T-cell (primary cell): ENCODE measurements at regions of chr5 and their contacts with region 1.

Region 1: DNA sequence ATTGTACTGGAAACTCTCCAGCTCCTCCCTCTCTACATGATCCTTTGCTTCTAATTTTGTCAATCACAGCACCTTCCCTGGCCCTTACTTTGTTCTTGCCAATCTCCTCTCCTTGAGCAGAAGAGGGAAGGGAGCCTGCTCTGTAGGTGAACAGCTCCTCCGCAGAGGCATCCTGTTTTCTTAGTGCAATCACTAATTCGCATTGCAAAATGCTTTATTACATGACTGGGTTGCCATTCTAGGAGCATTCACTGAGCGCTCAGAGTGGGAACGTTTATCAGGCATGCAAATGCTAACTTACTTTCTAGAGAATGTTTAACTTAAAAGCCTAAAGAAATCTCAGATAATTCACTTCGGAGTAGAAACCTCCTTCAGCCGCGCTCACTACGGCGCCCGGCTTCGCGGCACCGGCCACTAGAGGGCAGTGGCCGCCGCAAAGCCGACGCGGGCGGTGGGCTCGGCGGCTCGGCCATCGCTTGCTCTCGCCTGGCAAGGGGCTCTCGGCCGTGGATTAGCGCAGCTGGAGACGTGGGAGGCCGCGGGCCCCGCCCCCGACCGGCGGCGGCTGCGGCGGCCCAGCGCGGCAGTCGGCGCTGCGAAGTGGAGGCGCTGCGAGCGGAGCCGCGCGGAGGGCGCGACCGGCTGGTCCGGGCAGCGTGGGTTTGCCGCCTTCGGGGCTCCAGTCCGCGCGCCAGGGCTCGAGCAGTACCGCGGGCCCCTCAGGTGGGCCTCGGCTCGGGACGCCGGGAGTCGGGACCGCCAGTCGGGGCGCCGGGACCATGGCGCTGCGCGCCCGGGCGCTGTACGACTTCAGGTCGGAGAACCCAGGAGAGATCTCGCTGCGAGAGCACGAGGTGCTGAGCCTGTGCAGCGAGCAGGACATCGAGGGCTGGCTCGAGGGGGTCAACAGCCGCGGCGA is at the start of gene SNX18:
- DNase-seq: peak; percentile 80 to 96 (median 91)
- ATAC-seq: peak; percentile 92 to 93 (median 92)
- H3K4me3 ChIP-seq: peak within 1 kb of the TSS; percentile 64 to 84
- H3K4me3 Mint-ChIP-seq: peak within 1 kb of the TSS; percentile 79 to 85 (median 81)
- H3K27ac ChIP-seq: no peak within 1 kb of the TSS
- H3K27ac Mint-ChIP-seq: peak within 1 kb of the TSS; percentile 21 to 22
- H3K4me1 ChIP-seq: peaks cover 29 to 31% of the 10 kb centered on the region in 2 experiments
- H3K4me1 Mint-ChIP-seq: peaks cover 30 to 49% (median 40%) of the 10 kb centered on the region in 3 donors
- H3K27me3 ChIP-seq: no peaks in the 10 kb centered on the region
- H3K27me3 Mint-ChIP-seq: no peaks in the 10 kb centered on the region
- total RNA-seq, gene SNX18: 13.7 to 35.7 (median 31.1) TPM

Region 2: DNA sequence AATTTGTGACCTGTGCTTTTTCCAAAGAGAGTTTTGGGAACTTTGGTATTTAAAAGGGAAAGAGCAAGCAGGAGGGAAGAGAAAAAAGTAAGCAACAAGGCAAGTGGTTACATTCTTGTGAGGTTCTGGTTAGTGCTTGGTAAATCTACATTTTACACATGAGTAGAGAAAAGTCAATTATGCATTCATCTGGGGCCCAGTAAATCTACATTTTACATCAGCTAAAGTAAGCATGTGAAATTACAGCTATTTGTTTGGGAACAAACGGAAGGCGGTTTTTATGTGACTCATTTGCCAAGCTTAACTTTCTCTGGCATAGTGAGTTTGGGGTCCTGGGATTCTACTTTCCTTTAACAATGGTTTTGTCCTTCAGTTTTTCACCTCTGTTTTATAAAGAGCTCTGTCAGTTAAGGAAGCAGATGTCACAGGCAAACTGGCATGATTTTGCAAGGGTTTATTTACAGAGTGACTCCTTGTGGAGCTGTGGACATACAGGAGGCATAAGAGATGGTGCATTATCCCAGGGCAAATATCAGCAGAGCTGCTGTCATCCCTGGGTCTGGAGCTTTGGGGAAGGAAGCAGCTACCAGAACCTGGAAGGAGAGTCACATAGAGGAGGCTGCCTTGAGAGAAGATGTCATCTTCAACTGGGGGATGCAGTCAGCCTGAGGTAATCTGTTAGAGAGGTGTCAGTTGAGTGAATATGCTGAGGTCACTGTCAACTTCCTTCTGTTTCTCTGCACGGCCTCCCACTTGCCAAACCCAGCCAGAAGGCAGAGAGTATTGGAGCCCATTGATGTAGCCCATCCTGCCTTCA is 102.5 kb after region 1 on chr5:
- CTCF ChIA-PET with region 1: no interaction called
- POLR2A ChIA-PET with region 1: no interaction called
- DNase-seq: peak in 2 of 35 experiments; percentile 4 to 11
- ATAC-seq: no peak
- H3K4me3 ChIP-seq: no peak overlapping the region
- H3K4me3 Mint-ChIP-seq: no peak overlapping the region
- H3K27ac ChIP-seq: no peak overlapping the region
- H3K27ac Mint-ChIP-seq: no peak overlapping the region
- H3K4me1 ChIP-seq: peaks cover 6 to 12% of the 10 kb centered on the region in 2 experiments
- H3K4me1 Mint-ChIP-seq: peaks cover 5 to 17% (median 10%) of the 10 kb centered on the region in 3 donors
- H3K27me3 ChIP-seq: no peaks in the 10 kb centered on the region
- H3K27me3 Mint-ChIP-seq: peaks cover 0 to 2% of the 10 kb centered on the region in 2 donors

Region 3: DNA sequence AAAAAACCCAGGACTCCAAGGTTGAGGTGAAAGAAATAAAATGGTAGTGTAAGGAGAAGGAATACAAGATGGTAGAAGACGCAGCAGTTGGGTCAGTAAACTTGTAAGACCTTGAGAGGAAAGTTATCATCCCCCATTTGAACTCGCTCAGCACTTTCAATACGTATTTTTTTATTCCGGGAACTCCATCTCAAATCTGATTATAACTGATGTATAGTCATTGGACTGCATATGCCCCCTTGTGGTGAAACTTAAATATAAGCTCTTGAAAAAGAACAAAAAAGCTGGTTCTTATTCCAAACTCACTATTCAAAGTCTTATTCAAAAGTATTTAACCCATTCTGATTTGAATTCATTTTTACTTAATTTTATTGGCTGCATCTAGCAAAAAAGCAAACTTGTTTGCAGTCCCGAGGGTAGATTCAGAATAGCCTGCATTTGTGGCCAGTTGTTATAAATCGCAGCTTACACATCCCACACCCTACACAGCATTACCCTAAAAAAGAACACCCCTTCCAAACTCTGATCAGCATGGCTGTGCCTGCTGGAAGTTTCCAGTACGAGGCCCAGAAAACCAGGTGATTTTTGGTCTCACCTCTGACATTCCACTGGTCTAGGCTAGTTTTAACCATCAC is 350.0 kb after region 1 on chr5:
- CTCF ChIA-PET with region 1: interaction called, 15 to 67 read pairs
- POLR2A ChIA-PET with region 1: interaction called in 1 of 2 experiments, 3 read pairs
- DNase-seq: peak in 4 of 35 experiments; percentile 8 to 69 (median 10)
- ATAC-seq: peak; percentile 51 to 69 (median 66)
- H3K4me3 ChIP-seq: peak overlapping the region in 1 of 2 donors; percentile 10
- H3K4me3 Mint-ChIP-seq: peak overlapping the region; percentile 13 to 35 (median 31)
- H3K27ac ChIP-seq: no peak overlapping the region
- H3K27ac Mint-ChIP-seq: no peak overlapping the region
- H3K4me1 ChIP-seq: peaks cover 0 to 2% of the 10 kb centered on the region in 2 experiments
- H3K4me1 Mint-ChIP-seq: peaks cover 8 to 9% (median 8%) of the 10 kb centered on the region in 3 donors
- H3K27me3 ChIP-seq: no peaks in the 10 kb centered on the region
- H3K27me3 Mint-ChIP-seq: peaks cover 9 to 26% of the 10 kb centered on the region in 2 donors